ENCODE measurements at regions of chr19 and their contacts with region 1.

Region 1: GRCh38 chr19:47514869-47515588 is at the start of gene NAPA:
- DNase-seq: peak; percentile 99 to 100
- H3K4me3 ChIP-seq: peak within 1 kb of the TSS; percentile 94
- H3K27ac ChIP-seq: peak within 1 kb of the TSS; percentile 55
- H3K4me1 ChIP-seq: peaks cover 14% of the 10 kb centered on the region
- H3K27me3 ChIP-seq: no peaks in the 10 kb centered on the region
- CTCF ChIP-seq: no peak
- total RNA-seq, gene NAPA: 78.3 and 80.4 TPM in 2 replicates

Region 2: GRCh38 chr19:47157431-47158321 is 357.4 kb before region 1 on chr19:
- CTCF ChIA-PET with region 1: no interaction called
- POLR2A ChIA-PET with region 1: no interaction called
- intact Hi-C with region 1: loop called (anchors 10 kb)
- DNase-seq: peak; percentile 59 to 78
- H3K4me3 ChIP-seq: no peak overlapping the region
- H3K27ac ChIP-seq: peak overlapping the region; percentile 78
- H3K4me1 ChIP-seq: peaks cover 55% of the 10 kb centered on the region
- H3K27me3 ChIP-seq: no peaks in the 10 kb centered on the region
- CTCF ChIP-seq: 0 out of 2 replicates have a peak, but pooled peaks have one; percentile 15

Region 3: DNA sequence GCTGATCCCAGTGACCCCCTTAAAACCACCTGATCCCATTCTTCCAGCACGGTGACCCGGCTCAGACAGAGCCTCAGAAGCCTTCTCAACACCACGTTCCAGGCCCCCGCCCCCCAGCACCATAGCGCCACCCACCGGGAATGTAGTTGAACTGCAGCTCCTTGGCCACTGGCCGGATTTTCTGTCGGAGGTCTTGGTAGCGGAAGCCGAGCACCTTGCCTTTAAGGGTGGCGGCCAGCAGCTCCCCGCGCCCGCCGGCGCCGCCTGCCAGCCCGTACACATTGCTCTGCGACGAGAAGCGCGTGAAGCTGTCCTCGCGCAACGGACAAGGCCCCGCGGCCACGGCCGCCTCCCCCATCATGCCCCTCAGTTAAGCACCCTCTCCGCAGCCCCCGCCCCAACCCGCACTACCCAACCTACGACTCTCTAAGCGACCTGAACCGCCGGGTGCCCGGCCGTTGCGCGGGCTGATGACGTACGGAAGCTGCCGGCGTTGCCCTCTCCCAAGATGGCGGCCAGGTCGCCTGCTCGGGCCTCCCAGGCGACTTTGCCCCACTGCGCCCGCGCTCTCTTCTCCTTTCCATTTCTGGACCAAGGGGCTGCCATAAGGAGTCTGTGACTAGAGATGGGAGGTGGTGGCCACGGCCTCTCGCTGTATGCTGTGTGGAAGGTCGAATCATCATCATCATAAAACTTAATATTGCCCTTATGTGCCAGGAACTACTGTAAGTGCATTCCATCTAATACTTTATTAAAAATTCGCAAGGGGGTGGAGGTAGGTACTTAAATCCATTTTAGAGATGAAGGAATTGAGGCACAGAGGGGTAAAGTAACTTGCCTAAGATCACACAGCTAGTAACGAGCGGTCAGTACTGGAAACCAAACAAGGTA is 31.0 kb before region 1 on chr19 and contains the start of gene KPTN:
- CTCF ChIA-PET with region 1: no interaction called
- POLR2A ChIA-PET with region 1: no interaction called
- intact Hi-C with region 1: loop called (anchors 1 kb)
- DNase-seq: peak; percentile 75 to 88
- H3K4me3 ChIP-seq: peak within 1 kb of the TSS; percentile 84
- H3K27ac ChIP-seq: peak within 1 kb of the TSS; percentile 76
- H3K4me1 ChIP-seq: peaks cover 10% of the 10 kb centered on the region; the same call in 1 of the 2 replicates
- H3K27me3 ChIP-seq: no peaks in the 10 kb centered on the region
- CTCF ChIP-seq: peak; percentile 99
- total RNA-seq, gene KPTN: 20.8 and 24.2 TPM in 2 replicates

Region 4: DNA sequence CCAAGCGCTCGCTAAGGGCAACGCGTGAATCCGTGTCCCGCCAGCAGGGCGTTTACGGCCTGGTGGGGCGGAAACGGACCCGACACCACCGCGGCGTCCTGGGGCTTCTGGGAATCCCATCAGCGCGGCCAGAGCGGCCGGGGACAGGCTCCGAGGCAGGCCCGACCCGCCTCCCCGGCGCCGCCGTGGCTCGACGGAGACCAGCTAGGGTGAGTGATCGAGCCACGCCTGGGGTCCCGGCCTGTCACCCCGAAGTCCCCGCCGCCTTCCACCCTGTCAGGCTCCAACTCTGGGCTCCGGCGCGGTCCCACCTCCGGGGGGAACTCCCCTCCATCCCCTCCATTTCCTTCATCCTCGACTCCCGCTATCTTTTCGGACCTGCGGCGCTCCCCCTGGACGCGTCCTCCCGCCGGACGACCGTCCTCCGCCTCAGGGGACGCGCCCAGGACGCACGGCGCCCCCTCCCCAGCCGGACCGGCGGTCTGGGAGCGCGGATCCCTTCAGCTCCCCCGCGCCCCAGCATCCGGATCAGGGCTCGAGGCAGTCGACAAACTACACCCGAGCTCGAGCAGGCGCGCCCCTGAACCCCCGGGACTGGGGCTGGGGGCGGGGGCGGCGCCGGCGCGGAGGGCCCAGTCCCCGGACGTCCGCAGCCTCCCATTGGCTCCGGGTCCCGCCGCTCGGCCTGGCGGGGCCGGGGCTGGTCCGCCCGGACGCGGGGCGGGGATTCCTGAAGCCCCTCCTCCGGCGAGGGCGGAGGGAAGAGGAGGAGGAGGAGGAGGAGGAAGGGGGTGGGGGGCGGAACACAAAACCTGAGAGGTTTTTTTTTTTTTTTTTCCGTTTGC is 93.3 kb after region 1 on chr19:
- CTCF ChIA-PET with region 1: no interaction called
- POLR2A ChIA-PET with region 1: interaction called, 3 read pairs
- intact Hi-C with region 1: loop called (anchors 1 kb)
- DNase-seq: peak; percentile 80 to 98
- H3K4me3 ChIP-seq: peak overlapping the region; percentile 100
- H3K27ac ChIP-seq: peak overlapping the region; percentile 68
- H3K4me1 ChIP-seq: peaks cover 11% of the 10 kb centered on the region; the same call in 1 of the 2 replicates
- H3K27me3 ChIP-seq: no peaks in the 10 kb centered on the region
- CTCF ChIP-seq: peak; percentile 21; the same call in 1 of the 2 replicates

Region 5: DNA sequence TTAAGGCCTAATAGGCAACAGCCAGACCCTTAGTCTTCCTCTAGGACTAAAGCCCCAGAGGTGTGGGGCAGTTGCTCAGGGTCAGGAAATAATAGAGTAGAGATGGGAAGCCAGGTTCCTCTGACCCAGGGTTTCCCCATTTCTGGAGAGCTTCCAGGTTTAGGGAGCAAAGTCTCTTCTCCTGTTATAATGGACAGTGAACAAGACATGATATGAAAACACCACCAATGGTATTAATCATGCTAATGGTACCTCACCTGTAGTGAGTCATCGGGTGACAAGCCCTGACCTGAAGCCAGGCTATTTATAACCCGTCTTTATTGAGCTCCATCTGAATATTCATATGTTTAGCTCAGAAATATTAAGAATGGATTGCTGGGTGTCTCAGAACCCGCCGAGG is 118.5 kb after region 1 on chr19:
- CTCF ChIA-PET with region 1: no interaction called
- POLR2A ChIA-PET with region 1: no interaction called
- intact Hi-C with region 1: no loop called
- DNase-seq: peak; percentile 13 to 47
- H3K4me3 ChIP-seq: no peak overlapping the region
- H3K27ac ChIP-seq: no peak overlapping the region
- H3K4me1 ChIP-seq: peaks cover 11% of the 10 kb centered on the region
- H3K27me3 ChIP-seq: no peaks in the 10 kb centered on the region
- CTCF ChIP-seq: no peak

Region 6: GRCh38 chr19:47663841-47664771 is 149.1 kb after region 1 on chr19:
- CTCF ChIA-PET with region 1: interaction called, 3 read pairs
- POLR2A ChIA-PET with region 1: no interaction called
- intact Hi-C with region 1: loop called (anchors 1 kb)
- DNase-seq: peak; percentile 68 to 92
- H3K4me3 ChIP-seq: peak overlapping the region; percentile 35
- H3K27ac ChIP-seq: peak overlapping the region; percentile 99
- H3K4me1 ChIP-seq: peaks cover 82% of the 10 kb centered on the region
- H3K27me3 ChIP-seq: no peaks in the 10 kb centered on the region
- CTCF ChIP-seq: 0 out of 2 replicates have a peak, but pooled peaks have one; percentile 14